Activated CD4-positive, alpha-beta memory T cell treated with anti-CD3 and anti-CD28 coated beads for 36 hours (primary cell): ENCODE measurements at regions of chr3 and their contacts with region 1.

Region 1: DNA sequence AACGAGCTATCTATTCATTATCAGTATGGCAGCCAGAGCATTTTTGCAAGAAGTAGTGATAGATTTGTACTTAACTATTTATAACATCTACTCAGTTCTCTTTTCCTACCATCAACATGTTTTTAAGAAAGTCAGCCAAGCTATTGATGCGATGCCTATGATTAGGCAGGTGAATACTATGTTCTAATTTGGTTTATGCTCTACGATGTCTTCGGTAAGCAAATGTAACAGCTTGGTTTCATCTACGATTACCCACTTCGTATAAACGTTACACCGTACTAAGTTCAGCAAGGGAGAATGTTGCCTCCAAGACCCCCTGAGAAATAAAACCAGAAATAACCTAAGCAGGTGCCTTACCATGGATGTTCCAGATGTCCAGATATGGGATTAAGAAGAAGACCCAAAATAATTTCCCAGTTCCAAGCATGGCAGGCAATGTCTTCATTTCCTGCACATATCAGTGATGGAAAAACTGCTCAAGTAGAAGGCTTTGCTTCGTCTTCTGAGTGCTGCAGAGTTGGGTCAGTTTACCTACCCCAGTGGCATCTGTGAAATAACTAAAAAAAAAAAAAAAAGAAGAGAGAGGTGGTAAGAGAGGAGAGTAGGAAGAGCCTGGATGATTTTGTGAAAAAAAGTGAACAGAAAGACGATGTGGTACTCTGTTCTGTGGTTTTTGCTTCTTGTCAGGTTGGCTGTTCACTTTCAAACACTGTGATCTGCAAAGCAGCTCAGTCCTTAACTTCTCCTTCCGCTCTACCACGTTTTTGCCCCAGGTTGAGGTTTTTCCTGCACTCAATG is at the start of gene BTLA:
- DNase-seq: peak; percentile 59
- H3K4me3 Mint-ChIP-seq: peak within 1 kb of the TSS; percentile 99
- H3K27ac Mint-ChIP-seq: peak within 1 kb of the TSS; percentile 98
- H3K4me1 Mint-ChIP-seq: peaks cover 55% of the 10 kb centered on the region
- H3K27me3 Mint-ChIP-seq: no peaks in the 10 kb centered on the region
- total RNA-seq, gene BTLA: 17.3 to 18.7 TPM

Region 2: GRCh38 chr3:112333002-112333380 is 166.1 kb before region 1 on chr3 and contains the start of gene CD200:
- CTCF ChIA-PET with region 1: interaction called, 14 read pairs
- POLR2A ChIA-PET with region 1: interaction called, 13 read pairs
- intact Hi-C with region 1: loop called (anchors 2 kb)
- DNase-seq: peak; percentile 71
- H3K4me3 Mint-ChIP-seq: peak within 1 kb of the TSS; percentile 87
- H3K27ac Mint-ChIP-seq: peak within 1 kb of the TSS; percentile 88
- H3K4me1 Mint-ChIP-seq: peaks cover 46% of the 10 kb centered on the region
- H3K27me3 Mint-ChIP-seq: no peaks in the 10 kb centered on the region
- total RNA-seq, gene CD200: 34.2 to 34.5 TPM

Region 3: DNA sequence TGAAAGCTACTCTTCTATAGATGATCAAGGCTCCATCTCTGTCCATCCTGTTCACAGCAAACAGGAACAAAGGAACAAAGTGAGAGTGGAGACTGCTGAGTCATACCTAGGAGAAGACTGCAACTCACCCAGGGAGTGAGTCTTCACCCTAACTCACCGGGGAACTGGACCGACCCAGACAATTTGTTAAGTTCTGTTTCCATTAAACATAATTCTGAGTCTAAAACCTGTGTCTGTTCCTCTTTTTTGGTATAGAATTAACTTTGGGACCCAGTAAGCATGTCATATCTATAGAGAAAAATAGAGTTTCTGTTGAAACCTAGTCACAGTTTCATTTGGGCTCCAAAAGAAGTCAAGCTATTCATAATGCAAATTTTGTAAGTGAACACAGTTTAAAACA is 120.2 kb after region 1 on chr3:
- CTCF ChIA-PET with region 1: no interaction called
- POLR2A ChIA-PET with region 1: no interaction called
- intact Hi-C with region 1: no loop called
- DNase-seq: no peak
- H3K4me3 Mint-ChIP-seq: no peak overlapping the region
- H3K27ac Mint-ChIP-seq: no peak overlapping the region
- H3K4me1 Mint-ChIP-seq: no peaks in the 10 kb centered on the region
- H3K27me3 Mint-ChIP-seq: peaks cover 5% of the 10 kb centered on the region